ENCODE measurements at regions of chr7 and their contacts with region 1.

Region 1: GRCh38 chr7:105013221-105013815 is 687 bp upstream of the KMT2E start:
- DNase-seq: peak; percentile 96
- ATAC-seq: peak; percentile 85

Region 2: DNA sequence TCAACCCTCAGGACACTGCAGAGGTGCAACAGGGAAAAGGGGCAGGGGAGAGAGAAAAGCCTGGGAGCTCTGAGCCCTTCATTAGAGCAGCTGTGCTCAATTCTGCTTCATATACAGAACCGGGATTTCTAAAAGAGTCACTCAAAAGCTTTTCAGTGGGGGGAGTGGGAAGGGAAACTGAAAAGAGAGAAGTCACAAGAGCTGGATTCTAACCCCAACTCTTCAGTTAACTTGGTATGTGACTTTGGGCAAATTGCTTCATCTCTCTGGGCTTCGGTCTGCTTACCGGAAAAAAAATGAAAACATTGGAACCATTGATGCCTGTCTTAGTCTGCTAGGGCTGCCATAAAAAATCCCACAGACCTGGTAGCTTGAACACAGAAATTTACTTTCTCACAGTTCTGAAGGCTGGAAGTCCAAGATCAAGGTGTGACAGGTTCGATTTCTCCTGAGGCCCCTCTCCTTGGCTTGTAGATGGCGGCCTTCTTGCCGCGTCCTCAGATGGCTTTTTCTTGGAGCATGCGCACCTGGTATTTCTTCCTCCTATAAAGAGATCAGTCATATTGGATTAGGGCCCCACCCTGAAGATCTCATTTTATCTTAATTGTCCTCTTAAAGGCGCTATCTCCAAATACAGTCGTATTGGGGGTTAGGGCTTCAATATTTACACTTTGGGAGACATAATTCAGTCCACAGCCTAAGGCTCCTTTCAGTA is 117.6 kb before region 1 on chr7:
- intact Hi-C with region 1: no loop called
- DNase-seq: no peak
- ATAC-seq: no peak

Region 3: GRCh38 chr7:104943502-104944343 is 69.6 kb before region 1 on chr7:
- intact Hi-C with region 1: loop called (anchors 10 kb)
- DNase-seq: peak; percentile 52
- ATAC-seq: peak; percentile 30

Region 4: GRCh38 chr7:104983578-104984539 is 29.5 kb before region 1 on chr7:
- intact Hi-C with region 1: loop called (anchors 2 kb)
- DNase-seq: peak; percentile 94
- ATAC-seq: peak; percentile 92